Activated CD4-positive, alpha-beta T cell treated with anti-CD3 and anti-CD28 coated beads for 36 hours (primary cell): ENCODE measurements at regions of chr12 and their contacts with region 1.

Region 1: GRCh38 chr12:94101738-94102660 is 46.4 kb upstream of the PLXNC1 start:
- DNase-seq: peak; percentile 91
- ATAC-seq: peak; percentile 77
- H3K4me3 Mint-ChIP-seq: peak overlapping the region; percentile 76
- H3K27ac Mint-ChIP-seq: peak overlapping the region; percentile 62
- H3K4me1 Mint-ChIP-seq: peaks cover 30% of the 10 kb centered on the region
- H3K27me3 Mint-ChIP-seq: peaks cover 5% of the 10 kb centered on the region

Region 2: GRCh38 chr12:92987362-92987761 is 1114.6 kb before region 1 on chr12:
- CTCF ChIA-PET with region 1: interaction called, 10 read pairs
- POLR2A ChIA-PET with region 1: no interaction called
- intact Hi-C with region 1: loop called (anchors 1 to 5 kb)
- DNase-seq: no peak
- ATAC-seq: no peak
- H3K4me3 Mint-ChIP-seq: peak overlapping the region; percentile 22
- H3K27ac Mint-ChIP-seq: peak overlapping the region; percentile 88
- H3K4me1 Mint-ChIP-seq: peaks cover 37% of the 10 kb centered on the region
- H3K27me3 Mint-ChIP-seq: no peaks in the 10 kb centered on the region

Region 3: GRCh38 chr12:93502802-93503623 is 599.0 kb before region 1 on chr12:
- CTCF ChIA-PET with region 1: interaction called, 175 read pairs
- POLR2A ChIA-PET with region 1: interaction called, 7 read pairs
- intact Hi-C with region 1: loop called (anchors 1 to 2 kb)
- DNase-seq: peak; percentile 70
- ATAC-seq: peak; percentile 44
- H3K4me3 Mint-ChIP-seq: no peak overlapping the region
- H3K27ac Mint-ChIP-seq: no peak overlapping the region
- H3K4me1 Mint-ChIP-seq: peaks cover 10% of the 10 kb centered on the region
- H3K27me3 Mint-ChIP-seq: no peaks in the 10 kb centered on the region

Region 4: GRCh38 chr12:93569656-93570551 is 532.1 kb before region 1 on chr12:
- CTCF ChIA-PET with region 1: interaction called, 84 read pairs
- POLR2A ChIA-PET with region 1: no interaction called
- intact Hi-C with region 1: loop called (anchors 1 kb)
- DNase-seq: peak; percentile 88
- ATAC-seq: peak; percentile 67
- H3K4me3 Mint-ChIP-seq: peak overlapping the region; percentile 82
- H3K27ac Mint-ChIP-seq: peak overlapping the region; percentile 75
- H3K4me1 Mint-ChIP-seq: peaks cover 16% of the 10 kb centered on the region
- H3K27me3 Mint-ChIP-seq: peaks cover 23% of the 10 kb centered on the region

Region 5: GRCh38 chr12:93773122-93773871 is 328.7 kb before region 1 on chr12:
- CTCF ChIA-PET with region 1: interaction called, 42 read pairs
- POLR2A ChIA-PET with region 1: interaction called, 3 read pairs
- intact Hi-C with region 1: no loop called
- DNase-seq: peak; percentile 74
- ATAC-seq: peak; percentile 93
- H3K4me3 Mint-ChIP-seq: peak overlapping the region; percentile 56
- H3K27ac Mint-ChIP-seq: peak overlapping the region; percentile 59
- H3K4me1 Mint-ChIP-seq: peaks cover 45% of the 10 kb centered on the region
- H3K27me3 Mint-ChIP-seq: no peaks in the 10 kb centered on the region

Region 6: DNA sequence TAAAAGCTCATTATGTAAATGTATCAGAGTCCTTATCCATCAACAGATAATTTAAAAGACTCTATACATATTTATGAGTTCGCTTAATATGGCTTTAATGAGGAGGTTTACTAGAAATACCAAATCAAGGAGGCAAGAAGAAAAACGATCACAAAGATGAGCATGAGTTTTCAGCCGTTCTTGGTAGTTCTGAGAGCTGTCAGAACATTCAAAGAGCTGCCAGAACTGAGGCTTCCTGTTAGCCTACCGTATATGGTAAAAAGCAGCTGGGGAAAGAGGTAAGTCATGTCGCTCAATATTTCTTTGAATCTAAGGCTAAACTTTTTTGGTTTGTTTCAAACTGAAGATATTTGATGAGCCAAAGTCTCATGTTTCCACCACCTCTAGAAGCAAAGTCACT is 68.9 kb before region 1 on chr12:
- CTCF ChIA-PET with region 1: interaction called, 22 read pairs
- POLR2A ChIA-PET with region 1: no interaction called
- intact Hi-C with region 1: no loop called
- DNase-seq: no peak
- ATAC-seq: peak; percentile 66
- H3K4me3 Mint-ChIP-seq: no peak overlapping the region
- H3K27ac Mint-ChIP-seq: peak overlapping the region; percentile 45
- H3K4me1 Mint-ChIP-seq: peaks cover 37% of the 10 kb centered on the region
- H3K27me3 Mint-ChIP-seq: peaks cover 4% of the 10 kb centered on the region

Region 7: GRCh38 chr12:94126067-94126466 is 24.1 kb after region 1 on chr12:
- CTCF ChIA-PET with region 1: interaction called, 20 read pairs
- POLR2A ChIA-PET with region 1: interaction called, 4 read pairs
- intact Hi-C with region 1: no loop called
- DNase-seq: no peak
- ATAC-seq: no peak
- H3K4me3 Mint-ChIP-seq: no peak overlapping the region
- H3K27ac Mint-ChIP-seq: no peak overlapping the region
- H3K4me1 Mint-ChIP-seq: peaks cover 39% of the 10 kb centered on the region
- H3K27me3 Mint-ChIP-seq: no peaks in the 10 kb centered on the region